CD8-positive, alpha-beta T cell (primary cell): ENCODE measurements at regions of chr15 and their contacts with region 1.

Region 1: GRCh38 chr15:81286621-81287121 is 37.3 kb downstream of the STARD5 start:
- DNase-seq: peak in 3 of 9 experiments; percentile 35 to 75 (median 53)
- ATAC-seq: peak; percentile 93
- H3K4me3 ChIP-seq: peak overlapping the region in 1 of 2 experiments; percentile 36
- H3K4me3 Mint-ChIP-seq: peak overlapping the region; percentile 75
- H3K27ac ChIP-seq: peak overlapping the region; percentile 48 to 88
- H3K27ac Mint-ChIP-seq: peak overlapping the region; percentile 98
- H3K4me1 ChIP-seq: peaks cover 83% of the 10 kb centered on the region
- H3K4me1 Mint-ChIP-seq: peaks cover 81% of the 10 kb centered on the region
- H3K27me3 ChIP-seq: no peaks in the 10 kb centered on the region
- H3K27me3 Mint-ChIP-seq: no peaks in the 10 kb centered on the region
- CTCF ChIP-seq: no peak

Region 2: GRCh38 chr15:81182756-81183438 is 103.8 kb before region 1 on chr15:
- CTCF ChIA-PET with region 1: no interaction called
- POLR2A ChIA-PET with region 1: no interaction called
- intact Hi-C with region 1: no loop called
- DNase-seq: no peak
- ATAC-seq: no peak
- H3K4me3 ChIP-seq: no peak overlapping the region
- H3K4me3 Mint-ChIP-seq: no peak overlapping the region
- H3K27ac ChIP-seq: no peak overlapping the region
- H3K27ac Mint-ChIP-seq: no peak overlapping the region
- H3K4me1 ChIP-seq: no peaks in the 10 kb centered on the region
- H3K4me1 Mint-ChIP-seq: peaks cover 1% of the 10 kb centered on the region
- H3K27me3 ChIP-seq: peaks cover 0 to 2% of the 10 kb centered on the region in 2 experiments
- H3K27me3 Mint-ChIP-seq: peaks cover 34% of the 10 kb centered on the region
- CTCF ChIP-seq: no peak

Region 3: DNA sequence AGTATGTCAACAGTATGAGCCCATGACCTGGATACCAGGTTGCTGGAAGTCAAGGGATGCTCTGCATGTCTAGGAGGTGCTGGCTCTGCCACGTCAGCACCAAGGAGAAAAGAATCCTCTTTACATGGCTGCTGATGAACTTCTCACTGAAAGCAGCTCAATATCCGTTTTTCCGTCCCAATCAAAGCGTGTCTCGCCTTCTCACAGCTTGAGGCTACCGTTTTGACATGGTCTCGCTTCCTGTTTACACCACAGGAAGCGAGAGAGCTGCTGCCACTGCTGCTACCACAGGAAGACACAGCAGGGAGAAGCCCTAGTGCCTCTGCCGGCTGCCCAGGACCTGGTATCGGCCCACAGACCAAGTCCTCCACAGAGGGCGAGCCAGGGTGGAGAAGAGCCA is 10.0 kb after region 1 on chr15:
- CTCF ChIA-PET with region 1: interaction called, 498 read pairs
- POLR2A ChIA-PET with region 1: interaction called, 330 read pairs
- intact Hi-C with region 1: loop called in 1 of 2 experiments (anchors 1 kb)
- DNase-seq: peak; percentile 50 to 94 (median 79)
- ATAC-seq: peak; percentile 46
- H3K4me3 ChIP-seq: peak overlapping the region; percentile 88 to 89
- H3K4me3 Mint-ChIP-seq: peak overlapping the region; percentile 92
- H3K27ac ChIP-seq: peak overlapping the region; percentile 84 to 92
- H3K27ac Mint-ChIP-seq: peak overlapping the region; percentile 98
- H3K4me1 ChIP-seq: peaks cover 55% of the 10 kb centered on the region
- H3K4me1 Mint-ChIP-seq: peaks cover 72% of the 10 kb centered on the region
- H3K27me3 ChIP-seq: no peaks in the 10 kb centered on the region
- H3K27me3 Mint-ChIP-seq: no peaks in the 10 kb centered on the region
- CTCF ChIP-seq: no peak